ENCODE measurements at regions of chr14 and their contacts with region 1.

Region 1: GRCh38 chr14:75307700-75308379 is 29.2 kb downstream of the FOS start:
- DNase-seq: peak; percentile 76
- ATAC-seq: peak; percentile 60
- H3K4me3 ChIP-seq: no peak overlapping the region
- H3K27ac ChIP-seq: no peak overlapping the region
- H3K4me1 ChIP-seq: peaks cover 8% of the 10 kb centered on the region
- H3K27me3 ChIP-seq: no peaks in the 10 kb centered on the region
- CTCF ChIP-seq: peak; percentile 95
- POLR2A ChIP-seq: no peak
- RAD21 ChIP-seq: peak; percentile 90

Region 2: GRCh38 chr14:73973497-73973896 is 1334.3 kb before region 1 on chr14:
- CTCF ChIA-PET with region 1: no interaction called
- POLR2A ChIA-PET with region 1: no interaction called
- dilution Hi-C with region 1: no loop called
- in situ Hi-C with region 1: no loop called
- intact Hi-C with region 1: no loop called
- DNase-seq: no peak
- ATAC-seq: no peak
- H3K4me3 ChIP-seq: no peak overlapping the region
- H3K27ac ChIP-seq: no peak overlapping the region
- H3K4me1 ChIP-seq: peaks cover 7% of the 10 kb centered on the region
- H3K27me3 ChIP-seq: no peaks in the 10 kb centered on the region
- CTCF ChIP-seq: no peak
- POLR2A ChIP-seq: no peak
- RAD21 ChIP-seq: no peak

Region 3: DNA sequence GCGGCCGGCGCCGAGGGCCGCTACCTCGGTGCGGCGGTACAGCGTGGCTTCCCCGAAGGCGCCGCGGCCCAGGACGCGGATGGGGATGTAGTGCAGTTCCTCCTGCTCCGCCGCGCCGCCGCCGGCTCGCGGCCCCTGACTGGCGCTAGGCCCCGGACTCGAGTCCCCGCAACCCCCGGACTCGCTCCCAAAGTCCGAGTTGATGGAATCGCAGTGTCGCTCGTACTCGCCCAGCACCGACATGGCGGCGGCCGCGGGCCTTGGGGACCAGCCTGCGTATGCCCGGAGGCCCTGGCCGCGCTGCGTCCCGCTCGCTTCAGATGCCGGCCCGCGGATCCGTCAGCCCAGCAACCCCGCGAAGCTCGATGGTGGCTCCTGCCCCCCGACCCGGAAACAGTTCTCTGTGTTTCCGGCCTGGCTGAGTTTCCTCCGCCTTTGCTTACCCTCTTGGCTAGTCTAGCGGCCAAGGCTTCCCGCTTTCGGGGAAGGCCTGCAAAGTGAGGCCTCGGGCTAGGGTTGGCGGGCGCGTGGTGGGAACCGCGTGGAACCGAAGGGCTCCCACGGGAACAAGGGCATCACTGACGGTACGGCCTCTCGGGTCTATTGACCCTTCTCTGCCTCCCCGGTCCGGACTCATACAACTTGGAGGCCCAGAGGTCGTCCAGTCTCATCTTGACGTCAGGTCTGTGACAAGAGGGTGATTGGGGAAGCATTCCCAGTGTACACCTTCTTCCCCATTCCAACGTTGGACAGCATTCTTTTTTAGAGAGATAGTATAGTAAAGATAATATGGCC is 181.0 kb before region 1 on chr14 and contains the start of gene NEK9:
- CTCF ChIA-PET with region 1: interaction called, 10 read pairs
- POLR2A ChIA-PET with region 1: no interaction called
- dilution Hi-C with region 1: loop called (anchors 25 kb)
- in situ Hi-C with region 1: loop called (anchors 5 kb)
- intact Hi-C with region 1: loop called (anchors 1 kb)
- DNase-seq: peak; percentile 75
- ATAC-seq: peak; percentile 90
- H3K4me3 ChIP-seq: peak within 1 kb of the TSS; percentile 91
- H3K27ac ChIP-seq: peak within 1 kb of the TSS; percentile 93
- H3K4me1 ChIP-seq: peaks cover 5% of the 10 kb centered on the region; the same call in 1 of the 2 replicates
- H3K27me3 ChIP-seq: no peaks in the 10 kb centered on the region
- CTCF ChIP-seq: no peak
- POLR2A ChIP-seq: peak; percentile 79; the same call in 1 of the 2 replicates
- RAD21 ChIP-seq: no peak; the same call in 1 of the 2 replicates
- total RNA-seq, gene NEK9: 22.9 and 31.4 TPM in 2 replicates

Region 4: GRCh38 chr14:75258615-75259466 is 49.0 kb before region 1 on chr14:
- CTCF ChIA-PET with region 1: no interaction called
- POLR2A ChIA-PET with region 1: no interaction called
- dilution Hi-C with region 1: no loop called
- in situ Hi-C with region 1: no loop called
- intact Hi-C with region 1: no loop called
- DNase-seq: peak; percentile 100
- ATAC-seq: peak; percentile 99
- H3K4me3 ChIP-seq: peak overlapping the region; percentile 53
- H3K27ac ChIP-seq: peak overlapping the region; percentile 82
- H3K4me1 ChIP-seq: peaks cover 8% of the 10 kb centered on the region
- H3K27me3 ChIP-seq: no peaks in the 10 kb centered on the region
- CTCF ChIP-seq: no peak
- POLR2A ChIP-seq: peak; percentile 71; the same call in 1 of the 2 replicates
- RAD21 ChIP-seq: no peak

Region 5: GRCh38 chr14:75427482-75428229 is 119.8 kb after region 1 on chr14 and contains the start of gene JDP2:
- CTCF ChIA-PET with region 1: interaction called, 3 read pairs
- POLR2A ChIA-PET with region 1: no interaction called
- dilution Hi-C with region 1: no loop called
- in situ Hi-C with region 1: no loop called
- intact Hi-C with region 1: loop called (anchors 1 kb)
- DNase-seq: peak; percentile 76
- ATAC-seq: peak; percentile 81
- H3K4me3 ChIP-seq: peak within 1 kb of the TSS; percentile 58
- H3K27ac ChIP-seq: peak within 1 kb of the TSS; percentile 83
- H3K4me1 ChIP-seq: peaks cover 21% of the 10 kb centered on the region
- H3K27me3 ChIP-seq: no peaks in the 10 kb centered on the region
- CTCF ChIP-seq: 0 out of 2 replicates have a peak, but pooled peaks have one; percentile 8
- POLR2A ChIP-seq: peak; percentile 82
- RAD21 ChIP-seq: 0 out of 2 replicates have a peak, but pooled peaks have one; percentile 12
- total RNA-seq, gene JDP2: 35.7 and 38.9 TPM in 2 replicates

Region 6: GRCh38 chr14:75560962-75561432 is 253.2 kb after region 1 on chr14:
- CTCF ChIA-PET with region 1: interaction called, 7 read pairs
- POLR2A ChIA-PET with region 1: no interaction called
- dilution Hi-C with region 1: no loop called
- in situ Hi-C with region 1: no loop called
- intact Hi-C with region 1: loop called (anchors 1 kb)
- DNase-seq: peak; percentile 67
- ATAC-seq: peak; percentile 95
- H3K4me3 ChIP-seq: no peak overlapping the region
- H3K27ac ChIP-seq: no peak overlapping the region
- H3K4me1 ChIP-seq: no peaks in the 10 kb centered on the region; the same call in 1 of the 2 replicates
- H3K27me3 ChIP-seq: peaks cover 26% of the 10 kb centered on the region
- CTCF ChIP-seq: peak; percentile 84
- POLR2A ChIP-seq: 0 out of 2 replicates have a peak, but pooled peaks have one; percentile 20
- RAD21 ChIP-seq: peak; percentile 78